ENCODE measurements at regions of chr12 and their contacts with region 1.

Region 1: GRCh38 chr12:12126551-12126950 is 55.8 kb downstream of the BCL2L14 start:
- DNase-seq: no peak
- ATAC-seq: no peak

Region 2: GRCh38 chr12:12294215-12295005 is 167.9 kb after region 1 on chr12:
- intact Hi-C with region 1: loop called in 1 of 2 experiments (anchors 5 kb)
- DNase-seq: no peak
- ATAC-seq: peak in 1 of 2 donors; percentile 32

Region 3: DNA sequence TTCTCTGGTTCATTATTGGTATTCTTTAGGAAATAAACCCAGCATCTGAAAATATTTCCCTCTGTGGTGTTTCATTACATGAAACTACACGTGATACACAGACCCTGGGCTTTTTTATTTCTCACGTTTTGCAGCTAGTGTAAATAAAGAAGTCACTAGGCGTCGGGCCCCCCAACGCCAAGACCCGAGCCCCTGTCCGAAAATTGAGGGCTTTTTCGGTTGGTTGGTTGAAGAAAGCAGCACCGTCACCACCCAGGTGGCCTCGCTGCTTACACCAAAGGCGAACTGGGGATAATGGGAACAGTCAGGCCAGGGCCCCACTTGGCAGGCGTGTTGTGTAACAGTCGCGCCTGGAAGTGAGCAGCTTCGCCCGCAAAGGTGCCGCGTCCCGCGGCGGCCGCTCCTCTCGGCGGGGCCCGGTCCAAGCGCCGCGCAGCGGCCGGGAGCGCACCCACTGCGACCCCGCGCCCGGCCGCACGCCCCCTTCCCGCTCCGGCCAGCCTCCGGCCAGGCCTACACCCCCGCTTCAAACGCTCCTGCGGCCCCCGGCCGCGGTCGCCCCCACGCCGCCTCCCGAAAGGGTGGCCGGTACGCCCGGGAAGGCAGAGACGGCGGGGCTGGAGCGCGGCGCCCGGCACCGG is 434.9 kb after region 1 on chr12:
- intact Hi-C with region 1: no loop called
- DNase-seq: peak; percentile 73
- ATAC-seq: peak; percentile 24 to 40